Activated B cell treated with CpG ODN at 0.5 μM for 24 hours (primary cell): ENCODE measurements at regions of chr5 and their contacts with region 1.

Region 1: DNA sequence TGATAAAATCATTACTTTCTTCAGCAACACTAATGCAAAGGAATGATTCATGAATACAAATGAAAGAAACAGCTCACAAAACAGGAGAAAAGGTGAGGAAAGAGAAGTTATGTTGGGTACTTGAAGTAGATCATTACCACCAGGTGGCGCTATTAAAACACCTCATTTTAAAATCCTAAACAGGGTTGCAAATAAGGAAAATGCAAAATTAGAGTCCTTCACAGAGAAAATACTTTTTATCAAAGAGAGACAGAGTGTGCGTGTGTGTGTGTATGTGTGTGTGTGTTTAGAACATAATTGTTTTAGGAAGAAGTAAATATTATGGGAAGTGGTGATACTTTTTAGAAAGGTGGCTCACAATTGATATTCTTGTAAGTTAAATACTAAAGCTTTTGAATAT is 49.5 kb upstream of the CD180 start:
- DNase-seq: no peak
- ATAC-seq: no peak
- H3K4me3 Mint-ChIP-seq: no peak overlapping the region
- H3K27ac Mint-ChIP-seq: no peak overlapping the region
- H3K4me1 Mint-ChIP-seq: peaks cover 2% of the 10 kb centered on the region
- H3K27me3 Mint-ChIP-seq: no peaks in the 10 kb centered on the region
- CTCF ChIP-seq: peak; percentile 53

Region 2: GRCh38 chr5:66529182-66529581 is 716.9 kb before region 1 on chr5:
- CTCF ChIA-PET with region 1: no interaction called
- POLR2A ChIA-PET with region 1: no interaction called
- intact Hi-C with region 1: no loop called
- DNase-seq: no peak
- ATAC-seq: no peak
- H3K4me3 Mint-ChIP-seq: no peak overlapping the region
- H3K27ac Mint-ChIP-seq: no peak overlapping the region
- H3K4me1 Mint-ChIP-seq: peaks cover 5% of the 10 kb centered on the region
- H3K27me3 Mint-ChIP-seq: no peaks in the 10 kb centered on the region
- CTCF ChIP-seq: no peak

Region 3: DNA sequence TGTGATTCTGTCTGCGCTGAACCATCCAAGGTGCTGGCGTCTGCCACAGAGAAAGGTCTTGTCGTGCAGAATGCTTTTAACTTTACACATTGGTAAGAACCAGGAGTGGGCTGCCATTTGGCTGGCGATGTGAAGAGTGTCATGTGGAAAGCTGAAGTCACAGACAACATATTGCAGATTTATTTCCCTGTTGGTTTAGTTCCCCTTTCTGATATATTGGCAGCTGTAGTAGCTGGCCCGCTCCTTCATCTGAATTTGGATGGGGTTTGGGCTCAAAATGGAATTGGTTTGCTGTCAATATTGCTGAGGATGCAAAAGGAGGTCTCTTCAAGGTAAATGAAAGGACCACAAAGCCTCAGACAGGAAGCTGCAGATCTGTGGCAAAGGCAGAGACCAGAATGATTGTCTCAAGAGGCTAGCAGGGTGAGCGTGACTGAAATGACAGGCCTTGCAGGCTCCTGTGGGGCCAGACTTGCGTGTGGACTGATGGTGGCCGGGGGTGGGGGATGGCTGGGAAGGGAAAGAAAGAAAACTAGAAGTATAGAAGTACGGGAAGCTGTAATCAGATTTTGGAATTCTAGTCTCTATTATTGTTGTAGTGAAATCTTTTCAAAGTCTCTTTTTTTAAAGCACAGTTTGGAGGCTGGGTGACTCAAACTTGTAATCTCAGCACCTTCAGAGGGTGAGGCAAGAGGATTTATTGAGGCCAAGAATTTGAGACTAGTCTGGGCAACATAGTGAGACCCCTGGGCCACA is 24.4 kb before region 1 on chr5:
- CTCF ChIA-PET with region 1: interaction called, 12 read pairs
- POLR2A ChIA-PET with region 1: interaction called, 6 read pairs
- intact Hi-C with region 1: loop called (anchors 2 kb)
- DNase-seq: no peak
- ATAC-seq: peak; percentile 75
- H3K4me3 Mint-ChIP-seq: peak overlapping the region; percentile 78
- H3K27ac Mint-ChIP-seq: peak overlapping the region; percentile 97
- H3K4me1 Mint-ChIP-seq: peaks cover 65% of the 10 kb centered on the region
- H3K27me3 Mint-ChIP-seq: no peaks in the 10 kb centered on the region
- CTCF ChIP-seq: no peak

Region 4: GRCh38 chr5:68246802-68247201 is 1000.7 kb after region 1 on chr5:
- CTCF ChIA-PET with region 1: interaction called, 127 read pairs
- POLR2A ChIA-PET with region 1: no interaction called
- intact Hi-C with region 1: loop called (anchors 1 kb)
- DNase-seq: no peak
- ATAC-seq: no peak
- H3K4me3 Mint-ChIP-seq: no peak overlapping the region
- H3K27ac Mint-ChIP-seq: no peak overlapping the region
- H3K4me1 Mint-ChIP-seq: peaks cover 77% of the 10 kb centered on the region
- H3K27me3 Mint-ChIP-seq: no peaks in the 10 kb centered on the region
- CTCF ChIP-seq: no peak

Region 5: DNA sequence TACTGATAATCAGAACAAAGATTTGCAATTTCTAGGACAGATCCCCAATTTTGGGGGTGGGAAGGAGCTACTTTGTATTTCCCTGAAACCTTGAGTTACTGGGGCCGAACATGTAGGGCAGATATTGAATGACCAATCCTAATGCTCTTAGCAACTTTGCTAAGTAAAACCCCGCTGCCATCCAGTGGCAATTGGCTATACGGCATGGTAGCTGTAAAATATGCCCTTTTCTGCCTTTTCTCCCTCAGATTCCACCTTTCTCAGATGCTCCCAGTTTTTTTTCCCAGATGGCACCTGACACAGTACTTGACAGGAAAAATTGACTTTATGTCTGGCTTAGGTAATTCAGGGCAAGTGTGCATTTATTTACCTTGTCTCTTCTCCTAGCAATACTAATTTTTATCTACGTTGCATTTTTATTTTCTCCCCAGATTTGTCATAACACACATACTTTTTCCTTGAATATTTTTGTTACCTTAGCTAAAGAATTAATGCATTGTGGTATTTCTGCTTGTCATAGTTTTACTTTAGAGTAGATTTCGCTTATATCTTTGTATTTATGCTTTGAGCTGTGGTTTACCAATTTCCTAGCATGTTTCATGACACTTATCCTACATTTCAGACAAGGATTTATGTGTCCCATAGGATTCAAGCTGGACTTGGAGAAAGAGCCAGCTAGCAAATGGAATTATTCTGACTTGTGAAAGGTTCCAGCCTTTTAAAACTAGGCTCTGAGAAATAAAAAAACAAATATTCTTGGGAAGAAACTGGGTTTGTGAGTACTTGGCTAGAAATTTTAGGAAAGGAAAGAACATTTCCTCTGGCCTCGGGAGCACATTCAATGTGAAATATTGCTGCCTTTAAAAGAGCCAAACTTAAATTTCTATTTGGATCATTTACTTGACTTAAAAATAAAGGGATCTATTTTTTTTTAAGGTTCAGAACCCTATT is 1006.8 kb after region 1 on chr5:
- CTCF ChIA-PET with region 1: interaction called, 127 read pairs
- POLR2A ChIA-PET with region 1: interaction called, 4 read pairs
- intact Hi-C with region 1: loop called (anchors 1 kb)
- DNase-seq: no peak
- ATAC-seq: peak; percentile 75
- H3K4me3 Mint-ChIP-seq: no peak overlapping the region
- H3K27ac Mint-ChIP-seq: no peak overlapping the region
- H3K4me1 Mint-ChIP-seq: peaks cover 83% of the 10 kb centered on the region
- H3K27me3 Mint-ChIP-seq: no peaks in the 10 kb centered on the region
- CTCF ChIP-seq: no peak

Region 6: GRCh38 chr5:68272289-68272688 is 1026.2 kb after region 1 on chr5:
- CTCF ChIA-PET with region 1: interaction called, 69 read pairs
- POLR2A ChIA-PET with region 1: interaction called, 6 read pairs
- intact Hi-C with region 1: loop called (anchors 1 kb)
- DNase-seq: no peak
- ATAC-seq: no peak
- H3K4me3 Mint-ChIP-seq: no peak overlapping the region
- H3K27ac Mint-ChIP-seq: no peak overlapping the region
- H3K4me1 Mint-ChIP-seq: peaks cover 40% of the 10 kb centered on the region
- H3K27me3 Mint-ChIP-seq: no peaks in the 10 kb centered on the region
- CTCF ChIP-seq: no peak